GM12878 (cell line): ENCODE measurements at regions of chr18 and their contacts with region 1.

Region 1: DNA sequence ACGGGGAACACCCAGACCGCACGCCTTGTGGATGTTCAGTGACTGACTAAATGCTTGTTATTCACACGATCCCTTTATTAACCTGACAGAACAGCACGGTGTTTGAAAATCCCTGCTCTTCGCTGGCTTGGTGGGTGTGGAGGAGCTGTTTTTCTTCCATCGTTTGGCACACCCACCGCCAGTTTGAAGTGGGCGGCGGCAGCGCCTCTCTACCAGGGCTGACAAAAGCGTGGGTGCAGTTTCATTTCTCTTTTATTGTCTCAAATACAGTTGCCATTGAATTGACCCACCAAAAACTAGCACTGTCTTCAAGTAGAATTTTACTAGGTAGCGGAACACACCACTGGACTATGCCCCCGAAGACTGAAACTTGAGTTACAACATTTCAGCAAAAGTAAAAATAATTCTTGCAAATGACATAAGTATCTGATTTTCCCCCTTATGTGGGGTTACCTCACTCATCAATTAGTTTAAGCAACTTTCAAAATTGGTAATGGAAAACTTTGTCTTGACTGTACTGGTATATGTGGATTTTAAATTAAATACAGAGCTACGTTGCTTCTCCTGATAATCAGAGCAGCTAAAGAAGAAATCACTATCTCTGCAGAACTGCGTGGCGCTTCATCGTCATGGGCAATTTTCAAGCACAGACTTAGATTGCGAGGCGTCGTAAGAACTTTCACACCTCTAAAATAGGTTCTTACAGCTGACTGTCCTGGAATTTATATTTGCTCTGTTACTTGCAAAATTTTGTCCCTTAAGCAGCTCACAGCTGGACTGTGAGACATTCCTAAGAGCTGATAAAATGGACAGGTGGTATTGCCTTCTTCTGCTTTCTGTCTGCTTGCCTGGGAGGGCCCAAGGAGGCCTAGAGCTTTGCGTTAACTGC is 60.9 kb downstream of the LDLRAD4 start:
- DNase-seq: peak; percentile 26
- ATAC-seq: peak; percentile 91
- H3K4me3 ChIP-seq: no peak overlapping the region
- H3K27ac ChIP-seq: no peak overlapping the region
- H3K4me1 ChIP-seq: peaks cover 3% of the 10 kb centered on the region; the same call in 1 of the 2 replicates
- H3K27me3 ChIP-seq: no peaks in the 10 kb centered on the region; a peak in 1 of 4 replicates
- CTCF ChIP-seq: no peak
- EP300 ChIP-seq: peak; percentile 26 to 38; a peak in 2 of 4 replicates
- POLR2A ChIP-seq: no peak
- RAD21 ChIP-seq: no peak

Region 2: GRCh38 chr18:13289481-13290205 is 10.2 kb after region 1 on chr18:
- CTCF ChIA-PET with region 1: interaction called, 4 read pairs
- POLR2A ChIA-PET with region 1: interaction called, 8 read pairs
- RAD21 ChIA-PET with region 1: no interaction called
- SMC1A ChIA-PET with region 1: interaction called, 10 read pairs
- in situ Hi-C with region 1: no loop called
- intact Hi-C with region 1: no loop called
- DNase-seq: no peak
- ATAC-seq: peak; percentile 53
- H3K4me3 ChIP-seq: no peak overlapping the region
- H3K27ac ChIP-seq: no peak overlapping the region
- H3K4me1 ChIP-seq: no peaks in the 10 kb centered on the region
- H3K27me3 ChIP-seq: no peaks in the 10 kb centered on the region; a peak in 2 of 4 replicates
- CTCF ChIP-seq: no peak
- EP300 ChIP-seq: no peak
- POLR2A ChIP-seq: no peak
- RAD21 ChIP-seq: no peak

Region 3: GRCh38 chr18:13321923-13322322 is 42.5 kb after region 1 on chr18:
- CTCF ChIA-PET with region 1: no interaction called
- POLR2A ChIA-PET with region 1: no interaction called
- RAD21 ChIA-PET with region 1: no interaction called
- SMC1A ChIA-PET with region 1: no interaction called
- in situ Hi-C with region 1: no loop called
- intact Hi-C with region 1: no loop called
- DNase-seq: no peak
- ATAC-seq: no peak
- H3K4me3 ChIP-seq: no peak overlapping the region
- H3K27ac ChIP-seq: no peak overlapping the region
- H3K4me1 ChIP-seq: no peaks in the 10 kb centered on the region
- H3K27me3 ChIP-seq: peaks cover 0 to 2% of the 10 kb centered on the region in 2 experiments; a peak in 1 of 4 replicates
- CTCF ChIP-seq: no peak
- EP300 ChIP-seq: no peak
- POLR2A ChIP-seq: no peak
- RAD21 ChIP-seq: no peak

Region 4: DNA sequence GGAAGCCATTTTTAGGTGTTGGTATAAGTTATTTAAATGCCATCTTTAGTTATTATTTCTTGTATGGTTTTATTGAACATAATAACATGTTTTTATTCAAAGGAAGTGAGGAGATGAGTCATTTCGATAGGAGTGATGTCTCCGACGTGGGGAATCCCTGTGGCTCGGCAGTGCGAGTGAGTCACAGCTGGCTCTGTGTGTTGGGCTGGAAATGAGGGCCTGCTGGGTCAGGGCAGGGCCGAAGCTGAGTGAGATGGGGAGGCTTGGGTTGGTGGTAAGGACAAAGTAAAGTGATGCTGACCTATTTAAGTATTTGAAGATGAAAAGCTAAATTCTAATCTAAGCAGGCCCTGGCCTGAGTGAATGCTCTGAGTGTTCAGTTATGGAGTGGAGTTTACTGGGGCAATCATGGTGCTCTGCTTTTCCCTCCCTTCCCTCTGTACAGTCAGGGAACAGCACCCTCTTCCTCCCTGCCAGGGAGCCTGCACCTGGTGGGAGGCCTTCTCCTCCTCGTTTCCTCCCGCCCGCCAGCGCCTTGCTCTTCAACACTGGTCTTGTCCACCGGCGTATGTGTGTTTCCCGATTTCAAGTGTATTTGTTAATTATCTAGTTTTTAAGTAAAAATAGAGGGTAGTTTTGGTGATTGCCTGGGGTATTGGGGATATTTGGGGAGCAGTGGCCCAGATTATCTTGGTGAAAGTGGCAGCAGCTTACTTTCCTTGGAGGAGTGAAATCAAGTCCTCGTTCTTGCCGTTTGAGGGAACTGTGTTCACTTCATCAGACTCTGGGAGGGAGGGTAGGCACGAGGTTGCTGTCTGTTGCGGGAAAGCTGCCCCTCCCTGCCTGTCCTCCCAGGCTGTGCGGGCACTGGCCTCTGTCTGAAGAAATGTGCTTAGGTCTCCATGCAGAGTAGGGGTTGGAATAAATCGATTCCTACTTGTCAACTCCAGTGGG is 96.2 kb after region 1 on chr18:
- CTCF ChIA-PET with region 1: no interaction called
- POLR2A ChIA-PET with region 1: no interaction called
- RAD21 ChIA-PET with region 1: no interaction called
- SMC1A ChIA-PET with region 1: interaction called, 3 read pairs
- in situ Hi-C with region 1: no loop called
- intact Hi-C with region 1: loop called (anchors 5 kb)
- DNase-seq: peak; percentile 57
- ATAC-seq: peak; percentile 97
- H3K4me3 ChIP-seq: no peak overlapping the region
- H3K27ac ChIP-seq: no peak overlapping the region
- H3K4me1 ChIP-seq: peaks cover 37% of the 10 kb centered on the region
- H3K27me3 ChIP-seq: no peaks in the 10 kb centered on the region
- CTCF ChIP-seq: no peak
- EP300 ChIP-seq: no peak
- POLR2A ChIP-seq: no peak
- RAD21 ChIP-seq: no peak